PC-9 (cell line): ENCODE measurements at regions of chr2 and their contacts with region 1.

Region 1: GRCh38 chr2:218806346-218806978 is 24.5 kb downstream of the CYP27A1 start:
- DNase-seq: peak; percentile 76 to 88
- H3K4me3 ChIP-seq: 0 out of 2 replicates have a peak overlapping the region, but pooled peaks have one; percentile 35
- H3K27ac ChIP-seq: peak overlapping the region; percentile 68
- H3K4me1 ChIP-seq: peaks cover 20% of the 10 kb centered on the region
- H3K27me3 ChIP-seq: no peaks in the 10 kb centered on the region
- CTCF ChIP-seq: no peak

Region 2: DNA sequence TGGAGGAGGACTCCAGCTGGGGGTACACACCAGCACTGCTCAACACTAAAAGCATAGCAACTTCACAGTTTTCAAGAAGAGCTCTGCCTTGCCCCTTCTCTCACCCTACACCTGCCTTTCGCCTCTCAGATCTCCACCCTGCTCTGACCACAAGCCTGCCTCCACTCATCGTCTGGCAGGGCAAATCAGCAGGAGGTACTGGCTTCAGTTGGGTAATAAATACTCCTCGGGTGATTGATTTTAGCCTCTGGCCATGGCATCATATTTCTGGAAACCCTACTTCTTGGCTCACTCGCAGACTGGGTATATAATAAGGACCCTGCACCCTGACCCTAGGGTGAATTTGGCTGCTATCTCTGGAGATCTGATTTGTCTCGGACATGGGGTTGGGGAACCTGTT is 28.3 kb after region 1 on chr2:
- CTCF ChIA-PET with region 1: no interaction called
- POLR2A ChIA-PET with region 1: interaction called, 3 read pairs
- intact Hi-C with region 1: loop called (anchors 2 kb)
- DNase-seq: peak; percentile 69 to 93
- H3K4me3 ChIP-seq: no peak overlapping the region
- H3K27ac ChIP-seq: peak overlapping the region; percentile 23; the same call in 1 of the 2 replicates
- H3K4me1 ChIP-seq: peaks cover 63% of the 10 kb centered on the region
- H3K27me3 ChIP-seq: no peaks in the 10 kb centered on the region
- CTCF ChIP-seq: no peak